Activated CD4-positive, alpha-beta T cell treated with anti-CD3 and anti-CD28 coated beads, Interleukin-2, amount 10 ng/mL, durations not matched to agents 24 days and 14 days (primary cell): ENCODE measurements at regions of chr2 and their contacts with region 1.

Region 1: DNA sequence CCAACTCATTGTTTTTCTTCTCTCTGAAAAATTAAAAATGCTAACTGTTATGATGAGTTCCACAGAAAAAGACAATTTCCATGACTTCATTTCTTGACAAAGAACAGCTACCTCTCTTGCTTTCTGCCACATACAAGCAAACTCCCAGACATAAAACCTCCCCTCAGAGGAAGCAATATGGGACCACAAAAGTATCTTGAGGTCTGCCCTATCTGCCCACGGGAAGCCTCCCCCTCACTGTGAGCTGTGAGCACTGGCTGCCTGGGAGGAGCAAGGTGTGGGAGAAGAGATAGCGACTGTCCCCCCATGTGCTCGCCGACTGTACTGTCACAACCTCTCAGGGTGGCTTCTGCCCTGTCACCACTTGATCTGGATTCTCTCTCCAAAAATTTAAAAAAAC is 69.7 kb upstream of the NRP2 start:
- DNase-seq: peak; percentile 80
- H3K4me3 Mint-ChIP-seq: peak overlapping the region; percentile 50
- H3K27ac Mint-ChIP-seq: peak overlapping the region; percentile 84
- H3K4me1 Mint-ChIP-seq: peaks cover 45% of the 10 kb centered on the region
- H3K27me3 Mint-ChIP-seq: peaks cover 5% of the 10 kb centered on the region

Region 2: GRCh38 chr2:203997980-203998809 is 1614.4 kb before region 1 on chr2:
- intact Hi-C with region 1: loop called (anchors 10 kb)
- DNase-seq: peak; percentile 57
- H3K4me3 Mint-ChIP-seq: peak overlapping the region; percentile 55
- H3K27ac Mint-ChIP-seq: peak overlapping the region; percentile 69
- H3K4me1 Mint-ChIP-seq: peaks cover 72% of the 10 kb centered on the region
- H3K27me3 Mint-ChIP-seq: no peaks in the 10 kb centered on the region

Region 3: GRCh38 chr2:204972606-204973336 is 639.9 kb before region 1 on chr2:
- intact Hi-C with region 1: loop called (anchors 1 kb)
- DNase-seq: no peak
- H3K4me3 Mint-ChIP-seq: no peak overlapping the region
- H3K27ac Mint-ChIP-seq: peak overlapping the region; percentile 62
- H3K4me1 Mint-ChIP-seq: peaks cover 34% of the 10 kb centered on the region
- H3K27me3 Mint-ChIP-seq: no peaks in the 10 kb centered on the region

Region 4: DNA sequence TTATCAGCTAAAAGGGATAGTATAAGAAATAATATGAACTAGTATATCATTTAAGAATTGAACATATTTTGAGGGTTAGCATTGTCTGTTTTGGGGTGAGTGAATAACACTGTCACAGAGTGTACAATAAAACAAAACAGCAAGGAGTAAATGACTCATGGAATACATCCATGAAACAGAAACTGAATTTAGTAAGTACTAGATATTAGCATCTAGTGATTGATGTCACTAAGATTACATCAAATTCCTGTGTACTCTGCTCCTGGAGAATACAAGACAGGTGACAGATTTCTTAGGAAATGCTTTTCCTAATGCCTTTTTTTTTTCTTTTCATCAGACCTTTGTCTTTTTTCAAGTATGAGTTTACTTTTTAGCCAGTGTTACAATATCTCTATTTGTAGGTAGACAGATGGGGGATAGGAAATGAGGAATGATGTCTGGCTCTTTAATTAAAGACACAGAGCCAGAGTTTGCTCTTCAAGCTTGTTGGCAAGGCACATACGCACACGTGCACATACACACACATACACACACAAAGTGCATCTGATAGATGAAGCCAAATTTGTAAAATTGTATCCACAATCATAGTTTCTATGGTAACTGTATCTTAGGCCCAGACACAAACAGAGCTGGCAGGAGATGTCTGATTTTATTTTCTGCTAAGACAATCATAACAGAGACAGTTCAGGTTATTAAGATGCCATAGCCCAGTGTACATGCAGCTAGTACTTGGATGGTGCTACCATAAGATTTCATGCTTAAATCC is 68.5 kb before region 1 on chr2:
- intact Hi-C with region 1: loop called (anchors 5 kb)
- DNase-seq: no peak
- H3K4me3 Mint-ChIP-seq: no peak overlapping the region
- H3K27ac Mint-ChIP-seq: peak overlapping the region; percentile 71
- H3K4me1 Mint-ChIP-seq: peaks cover 16% of the 10 kb centered on the region
- H3K27me3 Mint-ChIP-seq: peaks cover 5% of the 10 kb centered on the region

Region 5: GRCh38 chr2:205660521-205661124 is 48.0 kb after region 1 on chr2:
- intact Hi-C with region 1: loop called (anchors 2 kb)
- DNase-seq: peak; percentile 84
- H3K4me3 Mint-ChIP-seq: peak overlapping the region; percentile 50
- H3K27ac Mint-ChIP-seq: peak overlapping the region; percentile 73
- H3K4me1 Mint-ChIP-seq: peaks cover 28% of the 10 kb centered on the region
- H3K27me3 Mint-ChIP-seq: peaks cover 4% of the 10 kb centered on the region